ENCODE measurements at regions of chr2 and their contacts with region 1.

Region 1: DNA sequence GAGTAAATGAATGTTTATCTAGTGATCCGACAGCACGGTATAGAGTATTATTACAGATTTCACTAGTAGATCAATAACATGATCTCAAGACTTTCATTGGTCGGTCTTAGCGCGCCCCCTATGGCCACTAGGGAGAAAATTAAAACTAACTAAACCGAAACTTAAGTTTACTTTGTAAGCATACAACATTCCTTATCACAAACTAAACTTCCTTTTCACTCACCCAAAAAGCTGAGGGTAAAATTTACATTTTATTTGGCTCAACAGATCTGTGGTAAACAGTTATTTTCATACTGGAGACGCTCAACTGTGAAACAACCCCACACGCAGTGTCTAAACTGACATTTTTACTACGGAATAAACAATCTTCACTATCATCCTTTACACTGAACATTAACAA is 215.6 kb upstream of the MAP2 start:
- DNase-seq: peak; percentile 8 to 44 (median 16)
- ATAC-seq: peak; percentile 60; the same call in 2 of the 3 replicates
- H3K4me3 ChIP-seq: 0 out of 2 replicates have a peak overlapping the region, but pooled peaks have one; percentile 17
- H3K27ac ChIP-seq: no peak overlapping the region
- H3K4me1 ChIP-seq: peaks cover 0 to 6% of the 10 kb centered on the region in 2 experiments; a peak in 1 of 5 replicates
- H3K27me3 ChIP-seq: no peaks in the 10 kb centered on the region
- CTCF ChIP-seq: peak; percentile 15 to 70 (median 48); a peak in 4 of 6 replicates
- EP300 ChIP-seq: no peak
- POLR2A ChIP-seq: no peak
- RAD21 ChIP-seq: peak; percentile 79 to 80

Region 2: GRCh38 chr2:208392300-208393080 is 815.7 kb before region 1 on chr2:
- CTCF ChIA-PET with region 1: interaction called, 4 read pairs
- POLR2A ChIA-PET with region 1: no interaction called
- in situ Hi-C with region 1: no loop called
- intact Hi-C with region 1: loop called (anchors 1 kb)
- DNase-seq: peak in 2 of 4 experiments; percentile 7 to 20
- ATAC-seq: peak; percentile 73
- H3K4me3 ChIP-seq: no peak overlapping the region
- H3K27ac ChIP-seq: no peak overlapping the region
- H3K4me1 ChIP-seq: no peaks in the 10 kb centered on the region
- H3K27me3 ChIP-seq: no peaks in the 10 kb centered on the region
- CTCF ChIP-seq: peak; percentile 12 to 49 (median 28); a peak in 2 of 6 replicates
- EP300 ChIP-seq: no peak
- POLR2A ChIP-seq: no peak
- RAD21 ChIP-seq: peak in 1 of 2 experiments; percentile 37; a peak in 2 of 4 replicates

Region 3: DNA sequence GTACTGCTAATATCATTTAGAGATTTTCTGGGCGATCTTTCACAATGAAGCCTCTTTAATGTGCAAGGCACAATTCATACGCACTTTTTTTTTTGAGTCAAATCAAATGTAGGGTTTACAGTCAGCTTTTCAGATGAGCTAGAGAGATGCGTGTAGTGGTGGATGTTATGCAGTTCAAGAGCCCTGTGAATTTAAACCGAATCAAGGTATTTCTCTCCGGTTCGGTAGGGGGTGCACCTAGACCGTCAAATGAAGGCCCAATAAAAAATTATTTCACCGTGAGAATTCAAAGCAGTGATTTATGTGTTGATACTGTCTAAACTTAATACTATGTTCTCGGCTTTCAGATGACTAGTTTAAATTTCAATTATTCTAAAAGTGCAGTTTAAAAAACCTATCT is 800.5 kb before region 1 on chr2:
- CTCF ChIA-PET with region 1: interaction called, 3 read pairs
- POLR2A ChIA-PET with region 1: no interaction called
- in situ Hi-C with region 1: loop called (anchors 25 kb)
- intact Hi-C with region 1: no loop called
- DNase-seq: peak; percentile 27 to 34 (median 32)
- ATAC-seq: peak; percentile 86
- H3K4me3 ChIP-seq: no peak overlapping the region
- H3K27ac ChIP-seq: no peak overlapping the region
- H3K4me1 ChIP-seq: peaks cover 0 to 9% of the 10 kb centered on the region in 2 experiments; a peak in 2 of 5 replicates
- H3K27me3 ChIP-seq: peaks cover 2 to 12% of the 10 kb centered on the region in 2 experiments; a peak in 3 of 5 replicates
- CTCF ChIP-seq: peak; percentile 48 to 75 (median 52); a peak in 4 of 6 replicates
- EP300 ChIP-seq: no peak
- POLR2A ChIP-seq: no peak
- RAD21 ChIP-seq: peak; percentile 78 to 81

Region 4: DNA sequence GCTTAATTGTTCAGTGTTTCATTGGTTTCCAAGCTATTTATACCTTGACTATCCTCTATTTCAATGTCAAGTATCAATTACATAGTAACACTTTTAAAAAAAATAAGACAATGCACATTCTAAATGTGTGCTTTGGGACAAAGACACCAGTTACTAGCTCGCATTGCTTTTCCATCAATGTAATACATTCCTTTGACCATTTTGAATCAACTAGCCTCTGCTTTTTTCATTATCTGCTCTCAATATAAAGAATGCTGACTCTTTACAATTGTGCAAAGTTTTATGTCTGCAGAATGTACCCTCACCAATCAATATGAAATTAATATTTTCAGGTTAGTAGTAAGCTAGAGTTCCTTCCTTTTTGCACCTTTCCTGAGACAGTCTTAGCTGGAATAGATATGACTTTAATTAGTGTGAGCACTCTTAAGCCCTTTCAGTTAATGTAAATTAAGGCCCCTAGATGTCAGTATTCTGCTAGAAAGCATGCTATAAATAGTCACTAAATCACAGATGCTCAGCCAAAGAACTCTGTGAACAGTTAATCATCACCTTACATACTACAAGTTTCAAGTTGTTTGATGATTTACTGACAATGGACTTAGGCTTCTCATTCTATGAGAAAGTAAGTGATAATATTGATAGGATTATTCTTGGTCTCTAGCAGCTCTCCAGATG is 388.1 kb before region 1 on chr2:
- CTCF ChIA-PET with region 1: no interaction called
- POLR2A ChIA-PET with region 1: no interaction called
- in situ Hi-C with region 1: no loop called
- intact Hi-C with region 1: loop called (anchors 5 kb)
- DNase-seq: peak in 1 of 4 experiments; percentile 2
- ATAC-seq: peak; percentile 73
- H3K4me3 ChIP-seq: no peak overlapping the region
- H3K27ac ChIP-seq: no peak overlapping the region
- H3K4me1 ChIP-seq: no peaks in the 10 kb centered on the region
- H3K27me3 ChIP-seq: no peaks in the 10 kb centered on the region
- CTCF ChIP-seq: peak in 2 of 3 experiments; percentile 15 to 36; a peak in 2 of 6 replicates
- EP300 ChIP-seq: no peak
- POLR2A ChIP-seq: no peak
- RAD21 ChIP-seq: peak; percentile 61 to 67

Region 5: GRCh38 chr2:209138079-209138478 is 70.1 kb before region 1 on chr2:
- CTCF ChIA-PET with region 1: no interaction called
- POLR2A ChIA-PET with region 1: no interaction called
- in situ Hi-C with region 1: no loop called
- intact Hi-C with region 1: no loop called
- DNase-seq: no peak
- ATAC-seq: no peak
- H3K4me3 ChIP-seq: no peak overlapping the region
- H3K27ac ChIP-seq: no peak overlapping the region
- H3K4me1 ChIP-seq: no peaks in the 10 kb centered on the region
- H3K27me3 ChIP-seq: no peaks in the 10 kb centered on the region
- CTCF ChIP-seq: no peak
- EP300 ChIP-seq: no peak
- POLR2A ChIP-seq: no peak
- RAD21 ChIP-seq: no peak